Heart left ventricle (tissue), 16 donors: ENCODE measurements at regions of chr18 and their contacts with region 1.

Region 1: GRCh38 chr18:74951165-74951760 is 257.7 kb downstream of the PTGR3 start:
- DNase-seq: peak in 3 of 5 donors; percentile 33 to 53 (median 34)
- ATAC-seq: peak; percentile 62 to 89 (median 82)
- H3K4me3 ChIP-seq: no peak overlapping the region
- H3K27ac ChIP-seq: peak overlapping the region in 1 of 12 donors; percentile 46
- H3K4me1 ChIP-seq: peaks cover 0 to 32% (median 9%) of the 10 kb centered on the region in 12 donors
- H3K27me3 ChIP-seq: no peaks in the 10 kb centered on the region
- CTCF ChIP-seq: no peak
- POLR2A ChIP-seq: no peak

Region 2: GRCh38 chr18:74645679-74646078 is 305.6 kb before region 1 on chr18:
- intact Hi-C with region 1: loop called in 1 of 10 experiments (anchors 10 kb)
- DNase-seq: no peak
- ATAC-seq: no peak
- H3K4me3 ChIP-seq: no peak overlapping the region
- H3K27ac ChIP-seq: no peak overlapping the region
- H3K4me1 ChIP-seq: no peaks in the 10 kb centered on the region
- H3K27me3 ChIP-seq: no peaks in the 10 kb centered on the region
- CTCF ChIP-seq: no peak
- POLR2A ChIP-seq: no peak

Region 3: GRCh38 chr18:74679006-74679678 is 272.1 kb before region 1 on chr18:
- intact Hi-C with region 1: loop called in 1 of 10 experiments (anchors 10 kb)
- DNase-seq: no peak
- ATAC-seq: no peak
- H3K4me3 ChIP-seq: no peak overlapping the region
- H3K27ac ChIP-seq: no peak overlapping the region
- H3K4me1 ChIP-seq: no peaks in the 10 kb centered on the region
- H3K27me3 ChIP-seq: no peaks in the 10 kb centered on the region
- CTCF ChIP-seq: no peak
- POLR2A ChIP-seq: no peak